ENCODE measurements at regions of chr16 and their contacts with region 1.

Region 1: GRCh38 chr16:1610276-1611017 is 1.4 kb downstream of the IFT140 start:
- DNase-seq: peak; percentile 93
- ATAC-seq: peak; percentile 78

Region 2: GRCh38 chr16:1420111-1420540 is 190.3 kb before region 1 on chr16:
- intact Hi-C with region 1: loop called (anchors 2 kb)
- DNase-seq: no peak
- ATAC-seq: no peak

Region 3: GRCh38 chr16:1533443-1533951 is 77.0 kb before region 1 on chr16 and contains the start of gene TMEM204:
- intact Hi-C with region 1: loop called (anchors 5 kb)
- DNase-seq: peak; percentile 87
- ATAC-seq: peak; percentile 65
- total RNA-seq, gene TMEM204: 30.7 TPM

Region 4: GRCh38 chr16:1677802-1678496 is 67.5 kb after region 1 on chr16 and contains the start of gene JPT2:
- intact Hi-C with region 1: loop called (anchors 5 kb)
- DNase-seq: peak; percentile 99
- ATAC-seq: peak; percentile 99
- total RNA-seq, gene JPT2: 41.5 TPM

Region 5: DNA sequence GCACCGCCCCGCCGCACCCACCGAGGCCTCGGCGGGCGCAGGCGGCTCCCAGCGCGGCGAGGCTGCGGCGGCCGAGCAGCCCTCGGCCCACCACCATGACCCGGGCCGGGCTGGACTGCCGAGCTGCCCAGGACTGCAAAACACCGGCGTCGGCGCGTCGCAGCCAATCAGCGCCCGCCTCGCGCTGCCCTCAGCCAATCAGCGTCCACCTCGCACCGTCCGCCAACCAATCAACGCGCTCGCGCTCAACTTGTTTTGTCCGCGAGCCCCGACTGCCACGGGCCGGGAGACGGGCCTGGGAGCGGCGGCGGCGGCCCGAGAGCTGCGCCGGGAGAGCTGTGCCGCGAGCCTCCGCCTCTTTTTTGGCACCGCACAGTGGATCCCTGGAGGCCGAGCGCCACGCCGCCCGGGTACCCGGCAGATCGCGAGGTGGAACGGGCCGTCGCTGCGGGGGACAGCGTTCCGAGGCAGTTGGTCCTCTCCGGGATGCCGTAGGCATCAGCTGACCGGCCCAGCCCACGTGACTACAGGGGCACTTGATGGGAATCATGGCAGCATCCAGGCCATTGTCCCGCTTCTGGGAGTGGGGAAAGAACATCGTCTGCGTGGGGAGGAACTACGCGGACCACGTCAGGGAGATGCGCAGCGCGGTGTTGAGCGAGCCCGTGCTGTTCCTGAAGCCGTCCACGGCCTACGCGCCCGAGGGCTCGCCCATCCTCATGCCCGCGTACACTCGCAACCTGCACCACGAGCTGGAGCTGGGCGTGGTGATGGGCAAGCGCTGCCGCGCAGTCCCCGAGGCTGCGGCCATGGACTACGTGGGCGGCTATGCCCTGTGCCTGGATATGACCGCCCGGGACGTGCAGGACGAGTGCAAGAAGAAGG is 216.5 kb after region 1 on chr16 and contains the starts of genes FAHD1 and HAGH:
- intact Hi-C with region 1: loop called (anchors 5 kb)
- DNase-seq: peak; percentile 96
- ATAC-seq: peak; percentile 96
- total RNA-seq, gene FAHD1: 28.3 TPM
- total RNA-seq, gene HAGH: 171 TPM

Measured in Right ventricle myocardium inferior (tissue), 1 donor.